Sigmoid colon (tissue), 7 donors: ENCODE measurements at regions of chr22 and their contacts with region 1.

Region 1: DNA sequence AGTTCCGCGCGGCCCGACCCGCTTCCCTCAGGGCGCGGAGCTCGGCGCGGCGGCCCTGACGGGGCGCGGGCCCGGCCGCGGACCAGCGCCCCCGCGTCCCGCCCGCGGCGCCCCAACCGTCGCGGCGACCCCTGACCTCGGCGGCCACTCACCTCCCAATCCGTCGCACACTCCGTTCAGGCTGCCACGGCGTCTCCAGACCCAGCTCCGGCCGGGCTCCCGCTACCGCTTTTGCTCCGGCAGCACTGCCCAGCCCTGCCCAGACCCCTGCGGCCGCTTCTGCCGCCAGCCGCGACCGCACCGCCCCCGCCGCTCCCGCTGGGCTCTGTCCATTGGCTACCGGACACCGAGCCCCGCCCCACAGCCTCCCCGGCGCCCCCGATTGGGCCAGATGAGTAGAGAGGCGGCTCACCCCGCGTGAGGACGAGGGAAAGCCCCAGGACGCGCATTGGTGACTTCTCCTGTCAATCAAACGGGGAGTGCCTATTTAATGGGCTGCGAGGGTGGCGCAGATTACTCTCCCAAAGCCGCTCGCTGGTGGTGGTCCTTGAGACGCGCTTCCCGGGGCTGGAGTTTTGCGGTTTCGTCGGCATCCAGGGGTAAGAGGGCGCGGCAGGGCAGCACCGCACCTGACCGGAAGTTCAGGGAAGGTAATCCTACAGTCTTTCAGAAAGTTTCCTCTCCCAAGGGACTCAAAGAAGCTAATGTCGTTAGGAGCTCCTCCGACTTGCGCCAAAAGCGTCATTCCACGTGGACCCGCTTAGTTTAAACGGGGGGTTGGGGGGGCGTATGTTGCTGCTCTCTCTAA is at the start of gene PACSIN2:
- DNase-seq: peak; percentile 100
- H3K4me3 ChIP-seq: peak within 1 kb of the TSS; percentile 89 to 96 (median 92)
- H3K27ac ChIP-seq: peak within 1 kb of the TSS; percentile 80 to 88 (median 87)
- H3K4me1 ChIP-seq: peaks cover 0 to 33% (median 29%) of the 10 kb centered on the region in 4 donors
- H3K27me3 ChIP-seq: no peaks in the 10 kb centered on the region
- CTCF ChIP-seq: no peak
- EP300 ChIP-seq: no peak
- POLR2A ChIP-seq: peak; percentile 83 to 93
- total RNA-seq, gene PACSIN2: 44.2 to 52.3 (median 48.3) TPM

Region 2: DNA sequence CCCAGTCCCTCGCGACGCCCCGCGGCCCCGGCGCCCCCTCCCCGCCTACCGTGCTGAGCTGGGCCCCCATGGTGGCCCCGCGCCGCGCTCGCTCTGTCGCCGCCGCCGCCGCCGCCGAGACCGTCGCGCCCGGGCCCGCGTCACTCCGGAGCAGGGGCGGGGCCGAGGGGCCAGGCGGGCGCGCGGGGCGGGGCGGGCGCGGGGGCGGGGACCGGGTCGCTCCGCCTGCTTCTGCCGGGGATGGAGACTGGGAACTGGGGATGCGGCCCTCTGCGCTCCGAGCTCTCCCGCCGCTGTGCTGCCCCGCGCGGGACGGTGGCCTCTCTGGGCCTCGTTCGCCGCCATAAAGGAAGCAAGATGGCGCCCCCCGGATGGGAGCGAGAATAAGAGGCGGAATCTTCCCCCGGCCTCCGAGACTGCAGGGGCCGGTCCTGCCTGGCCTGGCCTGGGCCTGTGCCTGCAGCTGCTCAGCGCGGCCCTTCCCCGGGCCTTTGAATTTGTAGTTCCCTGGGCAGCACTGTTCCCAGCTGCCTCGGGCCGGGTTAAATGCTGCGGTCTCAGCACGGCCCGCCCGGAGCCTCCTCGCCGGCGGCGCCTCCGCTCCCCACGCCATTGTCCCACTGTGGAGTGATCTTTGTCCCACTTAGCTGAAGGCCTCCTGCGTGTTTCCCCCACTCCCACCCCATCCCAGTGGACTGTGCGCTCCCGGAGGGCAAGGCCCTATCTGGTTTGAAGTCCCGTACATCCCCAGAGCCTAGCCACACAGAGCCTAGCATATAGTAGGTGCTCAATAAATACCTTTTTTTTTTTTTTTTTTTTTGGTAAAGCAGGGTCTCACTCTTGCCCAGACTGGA is 365.6 kb before region 1 on chr22 and contains the start of gene CYB5R3:
- intact Hi-C with region 1: loop called (anchors 10 kb)
- DNase-seq: peak; percentile 92
- H3K4me3 ChIP-seq: peak within 1 kb of the TSS; percentile 95 to 99 (median 97)
- H3K27ac ChIP-seq: peak within 1 kb of the TSS; percentile 95 to 98 (median 96)
- H3K4me1 ChIP-seq: peaks cover 0 to 49% (median 43%) of the 10 kb centered on the region in 4 donors
- H3K27me3 ChIP-seq: no peaks in the 10 kb centered on the region
- CTCF ChIP-seq: no peak
- EP300 ChIP-seq: no peak
- POLR2A ChIP-seq: peak; percentile 31 to 47
- total RNA-seq, gene CYB5R3: 71.5 to 156 (median 88.6) TPM

Region 3: DNA sequence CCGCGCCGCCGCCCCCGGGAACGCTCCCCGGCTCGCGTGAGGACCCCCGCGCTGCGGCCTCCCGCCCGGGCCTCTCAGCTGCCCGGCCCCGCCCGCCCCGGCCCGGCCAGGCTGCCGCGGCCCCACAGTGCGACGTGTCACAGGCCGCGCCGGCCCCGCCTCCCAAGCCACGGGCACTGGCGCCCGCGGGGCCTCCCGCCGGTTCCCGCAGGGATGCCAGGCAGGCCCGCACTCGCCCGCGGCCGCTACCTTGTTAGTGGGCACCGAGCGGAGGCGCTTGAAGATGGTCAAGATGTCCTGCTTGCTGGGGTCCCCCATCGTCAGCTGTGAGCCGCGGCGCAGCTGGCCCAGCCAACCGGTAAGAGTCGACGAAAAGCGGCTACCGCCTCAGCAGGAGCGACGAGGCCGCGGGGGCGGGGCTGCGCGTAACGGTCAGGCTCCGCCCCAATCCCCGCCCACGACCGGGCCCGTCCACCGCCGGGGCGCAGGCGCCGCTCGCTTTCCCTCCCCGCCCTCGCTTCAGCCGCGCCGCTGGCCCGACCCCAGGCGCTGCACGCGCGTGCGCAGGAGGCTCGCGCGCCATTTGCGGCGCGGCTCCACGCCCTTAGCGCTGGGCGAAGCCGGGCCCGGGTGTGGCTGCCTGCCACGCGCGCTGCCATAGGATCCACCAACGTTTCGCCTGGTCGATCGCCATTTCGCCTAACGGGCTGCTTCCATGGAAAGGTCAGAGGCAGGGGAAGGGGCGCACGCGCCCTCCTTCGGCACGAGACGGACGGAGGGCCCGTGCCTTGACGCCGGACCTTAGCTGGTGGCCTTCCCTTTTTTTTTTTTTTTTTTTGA is 158.0 kb before region 1 on chr22 and contains the start of gene ARFGAP3:
- intact Hi-C with region 1: loop called (anchors 2 kb)
- DNase-seq: peak; percentile 97
- H3K4me3 ChIP-seq: peak within 1 kb of the TSS; percentile 68 to 95 (median 78)
- H3K27ac ChIP-seq: peak within 1 kb of the TSS; percentile 90 to 98 (median 94)
- H3K4me1 ChIP-seq: peaks cover 0 to 29% (median 17%) of the 10 kb centered on the region in 4 donors
- H3K27me3 ChIP-seq: no peaks in the 10 kb centered on the region
- CTCF ChIP-seq: no peak
- EP300 ChIP-seq: no peak
- POLR2A ChIP-seq: peak; percentile 63 to 72
- total RNA-seq, gene ARFGAP3: 35.7 to 45.3 (median 40.5) TPM

Region 4: GRCh38 chr22:42868751-42869251 is 146.3 kb before region 1 on chr22:
- intact Hi-C with region 1: loop called (anchors 2 kb)
- DNase-seq: peak; percentile 90
- H3K4me3 ChIP-seq: no peak overlapping the region
- H3K27ac ChIP-seq: peak overlapping the region; percentile 59 to 74 (median 68)
- H3K4me1 ChIP-seq: peaks cover 0 to 24% (median 20%) of the 10 kb centered on the region in 4 donors
- H3K27me3 ChIP-seq: no peaks in the 10 kb centered on the region
- CTCF ChIP-seq: no peak
- EP300 ChIP-seq: no peak
- POLR2A ChIP-seq: no peak

Region 5: GRCh38 chr22:42901790-42902508 is 113.1 kb before region 1 on chr22:
- intact Hi-C with region 1: loop called (anchors 5 kb)
- DNase-seq: no peak
- H3K4me3 ChIP-seq: no peak overlapping the region
- H3K27ac ChIP-seq: peak overlapping the region; percentile 59 to 75 (median 69)
- H3K4me1 ChIP-seq: peaks cover 0 to 57% (median 44%) of the 10 kb centered on the region in 4 donors
- H3K27me3 ChIP-seq: no peaks in the 10 kb centered on the region
- CTCF ChIP-seq: no peak
- EP300 ChIP-seq: no peak
- POLR2A ChIP-seq: no peak

Region 6: DNA sequence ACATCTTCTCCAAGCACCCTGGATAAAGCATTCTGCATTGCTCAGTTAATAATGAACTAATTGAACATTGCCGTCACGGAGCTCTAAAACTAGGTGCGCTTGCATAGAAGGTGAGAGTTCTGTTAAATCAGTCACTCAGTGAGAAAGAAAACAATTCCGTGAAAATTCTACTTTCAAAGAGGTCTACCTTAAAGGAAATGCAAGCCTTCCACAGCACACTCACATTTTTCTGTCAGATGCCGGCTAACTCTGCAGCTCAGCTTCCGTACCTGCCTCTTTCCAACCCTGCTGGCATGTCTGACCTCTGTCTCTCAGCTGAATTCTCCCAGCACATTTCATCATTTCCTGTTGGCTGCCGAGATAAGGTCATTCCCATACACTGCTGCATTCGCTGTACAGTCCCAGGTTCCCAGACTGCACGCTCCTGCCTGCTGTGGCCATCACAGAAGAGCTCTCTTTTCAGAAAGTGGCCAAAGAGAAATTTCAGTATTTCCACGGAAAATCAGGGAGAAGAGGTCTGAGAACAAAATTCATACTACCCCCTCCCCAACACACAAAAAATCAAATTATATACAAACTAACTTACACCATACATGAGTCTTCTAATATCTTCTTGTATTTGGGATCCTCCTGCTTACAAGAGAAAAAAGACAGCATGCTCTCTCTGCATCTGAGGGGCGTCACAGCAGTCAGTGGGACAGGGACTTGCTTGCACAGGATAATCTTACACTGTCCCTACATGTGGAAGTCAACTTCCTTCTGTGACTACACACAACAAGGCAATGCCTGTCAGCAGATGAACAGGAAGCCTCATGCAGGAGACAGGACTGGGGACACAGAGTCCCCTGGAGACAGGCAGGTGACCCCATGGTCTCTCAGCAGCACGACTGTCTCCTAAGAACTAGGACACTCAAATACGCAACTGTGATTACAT is 55.2 kb before region 1 on chr22:
- intact Hi-C with region 1: loop called (anchors 10 kb)
- DNase-seq: peak; percentile 77
- H3K4me3 ChIP-seq: peak overlapping the region in 3 of 4 donors; percentile 3 to 28 (median 21)
- H3K27ac ChIP-seq: peak overlapping the region; percentile 53 to 75 (median 70)
- H3K4me1 ChIP-seq: peaks cover 0 to 77% (median 65%) of the 10 kb centered on the region in 4 donors
- H3K27me3 ChIP-seq: no peaks in the 10 kb centered on the region
- CTCF ChIP-seq: no peak
- EP300 ChIP-seq: no peak
- POLR2A ChIP-seq: no peak

Region 7: GRCh38 chr22:42994881-42995562 is 20.1 kb before region 1 on chr22:
- intact Hi-C with region 1: loop called (anchors 2 kb)
- DNase-seq: peak; percentile 88
- H3K4me3 ChIP-seq: peak overlapping the region; percentile 15 to 47 (median 42)
- H3K27ac ChIP-seq: peak overlapping the region; percentile 89 to 93 (median 90)
- H3K4me1 ChIP-seq: peaks cover 0 to 91% (median 78%) of the 10 kb centered on the region in 4 donors
- H3K27me3 ChIP-seq: no peaks in the 10 kb centered on the region
- CTCF ChIP-seq: no peak
- EP300 ChIP-seq: peak in 2 of 4 donors; percentile 13 to 25
- POLR2A ChIP-seq: peak; percentile 64 to 69